ENCODE measurements at regions of chr19 and their contacts with region 1.

Region 1: GRCh38 chr19:16371540-16371986 is 46.9 kb downstream of the KLF2 start:
- DNase-seq: peak; percentile 97
- H3K4me3 Mint-ChIP-seq: peak overlapping the region; percentile 72
- H3K27ac Mint-ChIP-seq: peak overlapping the region; percentile 83
- H3K4me1 Mint-ChIP-seq: peaks cover 67% of the 10 kb centered on the region
- H3K27me3 Mint-ChIP-seq: peaks cover 7% of the 10 kb centered on the region

Region 2: GRCh38 chr19:16185123-16185767 is 186.3 kb before region 1 on chr19 and contains the start of gene FAM32A:
- intact Hi-C with region 1: no loop called
- DNase-seq: peak; percentile 100
- H3K4me3 Mint-ChIP-seq: peak within 1 kb of the TSS; percentile 100
- H3K27ac Mint-ChIP-seq: peak within 1 kb of the TSS; percentile 95
- H3K4me1 Mint-ChIP-seq: peaks cover 27% of the 10 kb centered on the region
- H3K27me3 Mint-ChIP-seq: peaks cover 2% of the 10 kb centered on the region
- total RNA-seq, gene FAM32A: 59.2 and 65.2 TPM in 2 replicates

Region 3: GRCh38 chr19:16330368-16330801 is 41.2 kb before region 1 on chr19:
- intact Hi-C with region 1: loop called (anchors 1 kb)
- DNase-seq: peak; percentile 96
- H3K4me3 Mint-ChIP-seq: peak overlapping the region; percentile 87
- H3K27ac Mint-ChIP-seq: peak overlapping the region; percentile 63
- H3K4me1 Mint-ChIP-seq: peaks cover 54% of the 10 kb centered on the region
- H3K27me3 Mint-ChIP-seq: peaks cover 16% of the 10 kb centered on the region

Region 4: DNA sequence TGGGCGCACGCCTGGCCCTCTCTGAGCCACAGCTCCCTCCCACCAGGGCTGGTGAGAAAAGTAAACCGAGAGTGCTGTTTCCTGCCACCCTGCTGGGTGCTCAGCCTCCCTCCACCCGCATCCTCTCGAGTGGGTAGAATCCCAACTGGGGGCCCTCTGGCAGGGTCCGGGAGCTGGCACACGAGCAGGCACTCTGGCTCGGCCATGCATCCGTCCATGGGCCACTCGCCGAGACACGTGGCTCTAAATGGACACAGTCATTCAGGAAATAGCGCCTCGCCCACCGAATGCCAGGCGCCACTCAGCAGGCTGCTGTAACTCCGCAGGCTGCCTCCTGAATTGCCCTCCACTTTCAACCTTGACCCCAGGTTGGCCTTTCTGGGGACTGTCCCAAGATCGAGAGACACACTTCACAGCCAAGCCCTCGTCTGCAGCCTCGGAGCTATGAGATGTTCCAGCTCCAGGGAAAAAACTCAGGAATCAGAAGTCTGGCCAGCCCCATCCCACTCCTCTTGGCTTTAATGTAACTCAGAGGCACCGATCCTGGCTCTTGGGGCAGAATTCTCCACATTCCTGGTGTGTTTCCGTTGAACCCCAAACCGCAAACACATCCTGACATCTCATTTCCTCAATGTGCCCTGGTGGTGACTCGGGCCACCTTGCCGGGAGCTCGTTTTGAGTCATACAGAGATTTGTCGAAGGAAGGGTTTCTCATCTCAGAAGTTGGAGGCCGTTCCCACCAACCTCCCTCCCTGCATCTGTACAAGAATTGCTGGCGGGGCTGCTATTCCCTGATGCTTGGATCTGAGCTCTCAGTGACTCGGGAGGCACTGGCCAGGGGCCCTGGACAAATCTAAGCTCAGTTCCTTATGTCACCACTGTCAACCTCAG is 32.8 kb before region 1 on chr19:
- intact Hi-C with region 1: loop called (anchors 1 kb)
- DNase-seq: peak; percentile 90
- H3K4me3 Mint-ChIP-seq: peak overlapping the region; percentile 75
- H3K27ac Mint-ChIP-seq: peak overlapping the region; percentile 74
- H3K4me1 Mint-ChIP-seq: peaks cover 54% of the 10 kb centered on the region
- H3K27me3 Mint-ChIP-seq: peaks cover 10% of the 10 kb centered on the region

Region 5: GRCh38 chr19:16462757-16463250 is 91.2 kb after region 1 on chr19:
- intact Hi-C with region 1: no loop called
- DNase-seq: no peak
- H3K4me3 Mint-ChIP-seq: no peak overlapping the region
- H3K27ac Mint-ChIP-seq: no peak overlapping the region
- H3K4me1 Mint-ChIP-seq: peaks cover 24% of the 10 kb centered on the region
- H3K27me3 Mint-ChIP-seq: no peaks in the 10 kb centered on the region